Left ventricle myocardium inferior (tissue), 1 donor: ENCODE measurements at regions of chr12 and their contacts with region 1.

Region 1: DNA sequence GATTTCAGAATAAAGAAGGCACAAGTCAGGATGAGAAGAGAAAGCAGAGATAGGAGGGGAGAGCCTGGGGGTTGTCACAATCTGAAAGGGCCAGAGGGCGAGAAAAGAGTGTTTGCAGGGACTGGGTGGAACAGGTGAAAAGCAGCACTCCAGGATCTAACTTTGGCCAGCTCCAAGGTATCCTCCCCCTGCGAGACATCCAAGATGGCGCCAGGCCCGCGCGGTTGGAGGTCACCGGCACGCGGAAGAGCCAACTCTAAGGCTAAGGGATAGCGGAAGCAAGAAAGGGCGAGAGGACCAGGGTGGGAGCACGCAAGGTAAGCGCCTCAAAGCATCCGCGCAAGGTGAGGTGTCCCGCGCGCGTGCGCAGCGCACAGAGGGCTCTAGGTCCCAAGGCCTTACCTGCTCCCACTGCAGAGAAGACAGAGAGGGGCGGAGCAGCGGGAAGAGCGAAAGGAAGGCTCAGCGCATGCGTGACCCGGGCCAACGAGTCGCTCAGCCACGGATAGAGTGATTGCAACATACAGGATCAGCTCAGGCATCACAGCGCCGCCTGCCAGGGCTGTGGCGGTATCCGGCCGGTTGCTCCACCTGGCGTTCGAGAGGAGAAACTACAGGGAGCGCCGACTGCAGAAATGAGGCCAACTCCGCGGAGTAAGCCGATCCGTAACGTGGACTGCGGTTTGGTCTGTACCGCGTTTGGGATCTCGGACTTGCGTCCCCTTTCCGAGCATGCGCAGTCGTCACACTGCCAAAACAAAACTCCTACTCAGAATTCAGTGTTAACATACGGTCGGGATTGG is at the start of gene ATP5MC2:
- DNase-seq: peak; percentile 96
- H3K4me3 ChIP-seq: peak within 1 kb of the TSS; percentile 88
- H3K27ac ChIP-seq: peak within 1 kb of the TSS; percentile 90
- H3K4me1 ChIP-seq: peaks cover 60% of the 10 kb centered on the region
- H3K27me3 ChIP-seq: no peaks in the 10 kb centered on the region
- CTCF ChIP-seq: no peak
- total RNA-seq, gene ATP5MC2: 534 TPM

Region 2: GRCh38 chr12:53492830-53493611 is 182.8 kb before region 1 on chr12:
- intact Hi-C with region 1: no loop called
- DNase-seq: peak; percentile 92
- H3K4me3 ChIP-seq: peak overlapping the region; percentile 75
- H3K27ac ChIP-seq: peak overlapping the region; percentile 83
- H3K4me1 ChIP-seq: peaks cover 43% of the 10 kb centered on the region
- H3K27me3 ChIP-seq: no peaks in the 10 kb centered on the region
- CTCF ChIP-seq: no peak

Region 3: DNA sequence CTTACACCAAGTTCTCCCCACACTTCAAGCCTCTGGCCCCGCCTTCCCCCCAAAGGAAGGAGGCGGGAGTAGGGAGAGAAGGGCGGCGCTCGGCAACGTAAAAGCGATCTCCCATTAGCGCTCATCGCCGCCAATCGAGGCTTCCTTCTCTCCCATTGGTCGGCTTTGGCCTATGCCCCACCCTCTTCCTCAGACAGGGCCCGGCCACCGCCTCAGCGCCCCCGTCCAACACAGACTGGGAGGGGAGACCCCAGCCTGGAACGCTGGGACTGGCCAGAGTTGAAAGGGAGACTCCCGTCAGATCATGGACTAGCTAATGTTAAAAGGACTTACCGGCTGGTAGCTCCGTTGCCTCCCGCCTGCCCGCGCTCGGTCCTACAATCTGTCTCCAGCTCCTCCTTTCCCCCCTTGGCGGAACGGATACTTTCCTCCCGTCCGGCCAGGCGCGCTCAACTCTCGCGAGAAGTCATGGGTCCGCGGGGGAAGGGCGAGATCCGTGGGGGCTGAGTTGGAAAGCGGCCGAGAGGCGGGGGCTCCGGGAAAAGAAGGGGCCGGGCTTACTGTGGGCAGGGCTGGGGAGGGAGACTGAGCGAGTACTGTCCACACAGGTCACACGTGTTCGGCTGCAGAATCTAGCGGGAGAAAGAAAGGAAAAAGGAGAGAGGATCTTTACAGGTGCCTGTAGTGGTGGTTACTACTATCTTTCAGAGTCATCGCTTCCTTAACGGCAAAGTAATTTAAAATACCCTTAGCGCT is 49.7 kb before region 1 on chr12 and contains the start of gene ATF7:
- intact Hi-C with region 1: loop called (anchors 10 kb)
- DNase-seq: peak; percentile 98
- H3K4me3 ChIP-seq: peak within 1 kb of the TSS; percentile 79
- H3K27ac ChIP-seq: peak within 1 kb of the TSS; percentile 98
- H3K4me1 ChIP-seq: peaks cover 42% of the 10 kb centered on the region
- H3K27me3 ChIP-seq: no peaks in the 10 kb centered on the region
- CTCF ChIP-seq: peak; percentile 10
- total RNA-seq, gene ATF7: 29.8 TPM

Region 4: GRCh38 chr12:53770281-53770680 is 94.4 kb after region 1 on chr12:
- intact Hi-C with region 1: no loop called
- DNase-seq: no peak
- H3K4me3 ChIP-seq: no peak overlapping the region
- H3K27ac ChIP-seq: no peak overlapping the region
- H3K4me1 ChIP-seq: no peaks in the 10 kb centered on the region
- H3K27me3 ChIP-seq: peaks cover 84% of the 10 kb centered on the region
- CTCF ChIP-seq: no peak